CD8-positive, alpha-beta T cell (primary cell): ENCODE measurements at regions of chr7 and their contacts with region 1.

Region 1: GRCh38 chr7:55572378-55573233 is at the start of gene VOPP1:
- DNase-seq: peak; percentile 25 to 88 (median 57)
- ATAC-seq: peak; percentile 44
- H3K4me3 ChIP-seq: peak within 1 kb of the TSS; percentile 74 to 80
- H3K4me3 Mint-ChIP-seq: peak within 1 kb of the TSS; percentile 92
- H3K27ac ChIP-seq: peak within 1 kb of the TSS; percentile 66 to 80
- H3K27ac Mint-ChIP-seq: peak within 1 kb of the TSS; percentile 91
- H3K4me1 ChIP-seq: peaks cover 48% of the 10 kb centered on the region
- H3K4me1 Mint-ChIP-seq: peaks cover 56% of the 10 kb centered on the region
- H3K27me3 ChIP-seq: no peaks in the 10 kb centered on the region
- H3K27me3 Mint-ChIP-seq: no peaks in the 10 kb centered on the region
- CTCF ChIP-seq: no peak
- total RNA-seq, gene VOPP1: 38.7 to 38.9 TPM

Region 2: DNA sequence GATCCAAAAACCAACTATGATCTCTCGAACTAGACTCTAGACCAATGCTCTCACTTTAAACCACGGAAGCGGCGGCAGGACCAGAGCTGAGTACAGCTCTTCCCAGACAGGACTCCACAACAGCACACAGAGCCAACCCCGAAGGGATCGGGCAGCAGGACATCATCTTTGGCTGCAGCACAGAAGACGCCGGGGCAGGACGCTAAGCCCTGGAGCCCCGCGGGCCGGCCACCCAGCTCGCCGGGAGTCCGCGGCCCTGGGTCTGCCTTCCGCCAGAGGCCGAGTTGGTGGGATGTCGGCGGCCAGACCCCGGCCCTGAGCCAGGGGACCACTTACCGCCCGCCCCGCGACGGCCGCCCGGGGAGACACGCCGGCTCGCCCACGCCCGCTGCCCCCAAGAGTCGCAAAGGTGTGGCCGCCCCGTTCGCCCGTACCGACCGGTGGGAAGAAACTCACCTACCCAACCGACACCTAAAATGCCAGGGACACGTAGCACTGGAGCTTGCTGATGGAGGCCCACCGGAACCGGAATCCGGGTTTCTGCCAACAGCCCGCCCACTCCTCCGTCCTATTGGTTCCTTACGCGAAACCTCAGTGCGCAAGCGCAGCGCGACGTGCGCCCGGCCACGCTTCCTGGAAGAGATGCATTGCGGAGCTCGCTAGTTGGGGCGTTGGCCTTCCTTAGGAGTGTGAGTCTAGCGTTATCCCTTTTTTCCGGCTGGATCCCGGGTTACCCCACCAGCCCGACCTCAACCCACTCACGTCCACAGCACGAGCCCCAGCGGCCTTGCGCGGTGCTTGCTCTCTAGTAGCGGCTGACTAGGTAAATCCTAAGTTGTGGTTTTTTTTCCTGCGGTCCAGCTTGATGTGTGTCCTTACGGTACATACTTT is 813.7 kb before region 1 on chr7 and contains the start of gene SEC61G:
- CTCF ChIA-PET with region 1: no interaction called
- POLR2A ChIA-PET with region 1: no interaction called
- intact Hi-C with region 1: loop called in 1 of 2 experiments (anchors 1 kb)
- DNase-seq: peak; percentile 87 to 98 (median 95)
- ATAC-seq: peak; percentile 97
- H3K4me3 ChIP-seq: peak within 1 kb of the TSS; percentile 78 to 96
- H3K4me3 Mint-ChIP-seq: peak within 1 kb of the TSS; percentile 100
- H3K27ac ChIP-seq: peak within 1 kb of the TSS; percentile 74 to 90
- H3K27ac Mint-ChIP-seq: peak within 1 kb of the TSS; percentile 97
- H3K4me1 ChIP-seq: peaks cover 21% of the 10 kb centered on the region
- H3K4me1 Mint-ChIP-seq: peaks cover 46% of the 10 kb centered on the region
- H3K27me3 ChIP-seq: no peaks in the 10 kb centered on the region
- H3K27me3 Mint-ChIP-seq: peaks cover 3% of the 10 kb centered on the region
- CTCF ChIP-seq: no peak
- total RNA-seq, gene SEC61G: 50.5 to 58.0 TPM

Region 3: GRCh38 chr7:55534175-55534915 is 38.3 kb before region 1 on chr7:
- CTCF ChIA-PET with region 1: interaction called, 8 read pairs
- POLR2A ChIA-PET with region 1: interaction called, 21 read pairs
- intact Hi-C with region 1: loop called (anchors 1 to 2 kb)
- DNase-seq: peak in 6 of 9 experiments; percentile 21 to 74 (median 56)
- ATAC-seq: peak; percentile 43
- H3K4me3 ChIP-seq: peak overlapping the region in 1 of 2 experiments; percentile 21
- H3K4me3 Mint-ChIP-seq: peak overlapping the region; percentile 74
- H3K27ac ChIP-seq: peak overlapping the region in 1 of 2 experiments; percentile 38
- H3K27ac Mint-ChIP-seq: peak overlapping the region; percentile 97
- H3K4me1 ChIP-seq: peaks cover 70% of the 10 kb centered on the region
- H3K4me1 Mint-ChIP-seq: peaks cover 94% of the 10 kb centered on the region
- H3K27me3 ChIP-seq: no peaks in the 10 kb centered on the region
- H3K27me3 Mint-ChIP-seq: no peaks in the 10 kb centered on the region
- CTCF ChIP-seq: no peak

Region 4: DNA sequence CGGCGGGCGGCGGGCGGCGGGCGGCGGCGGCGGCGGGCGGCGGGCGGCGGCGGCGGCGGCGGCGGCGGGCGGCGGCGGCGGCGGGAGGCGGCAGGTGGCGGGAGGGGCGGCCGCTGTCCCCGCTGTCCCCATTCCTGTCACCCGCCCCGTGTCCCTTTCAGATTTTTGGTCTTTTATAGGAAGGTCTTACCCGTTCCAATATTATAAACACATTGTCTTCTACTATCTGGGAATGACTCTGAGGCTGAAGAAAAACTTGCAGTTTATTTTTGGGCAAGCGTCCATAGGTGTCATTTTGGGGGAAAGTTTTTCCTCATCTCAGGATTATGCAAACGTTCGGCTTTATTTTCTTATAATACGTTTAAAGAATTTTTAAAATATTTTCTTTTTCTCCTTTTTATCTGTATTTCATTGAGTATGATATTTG is 315.2 kb after region 1 on chr7:
- CTCF ChIA-PET with region 1: no interaction called
- POLR2A ChIA-PET with region 1: no interaction called
- intact Hi-C with region 1: loop called (anchors 5 kb)
- DNase-seq: peak in 2 of 9 experiments; percentile 5 to 38
- ATAC-seq: peak; percentile 15
- H3K4me3 ChIP-seq: peak overlapping the region in 1 of 2 experiments; percentile 58
- H3K4me3 Mint-ChIP-seq: peak overlapping the region; percentile 86
- H3K27ac ChIP-seq: no peak overlapping the region
- H3K27ac Mint-ChIP-seq: peak overlapping the region; percentile 87
- H3K4me1 ChIP-seq: no peaks in the 10 kb centered on the region
- H3K4me1 Mint-ChIP-seq: peaks cover 8% of the 10 kb centered on the region
- H3K27me3 ChIP-seq: no peaks in the 10 kb centered on the region
- H3K27me3 Mint-ChIP-seq: no peaks in the 10 kb centered on the region
- CTCF ChIP-seq: no peak

Region 5: DNA sequence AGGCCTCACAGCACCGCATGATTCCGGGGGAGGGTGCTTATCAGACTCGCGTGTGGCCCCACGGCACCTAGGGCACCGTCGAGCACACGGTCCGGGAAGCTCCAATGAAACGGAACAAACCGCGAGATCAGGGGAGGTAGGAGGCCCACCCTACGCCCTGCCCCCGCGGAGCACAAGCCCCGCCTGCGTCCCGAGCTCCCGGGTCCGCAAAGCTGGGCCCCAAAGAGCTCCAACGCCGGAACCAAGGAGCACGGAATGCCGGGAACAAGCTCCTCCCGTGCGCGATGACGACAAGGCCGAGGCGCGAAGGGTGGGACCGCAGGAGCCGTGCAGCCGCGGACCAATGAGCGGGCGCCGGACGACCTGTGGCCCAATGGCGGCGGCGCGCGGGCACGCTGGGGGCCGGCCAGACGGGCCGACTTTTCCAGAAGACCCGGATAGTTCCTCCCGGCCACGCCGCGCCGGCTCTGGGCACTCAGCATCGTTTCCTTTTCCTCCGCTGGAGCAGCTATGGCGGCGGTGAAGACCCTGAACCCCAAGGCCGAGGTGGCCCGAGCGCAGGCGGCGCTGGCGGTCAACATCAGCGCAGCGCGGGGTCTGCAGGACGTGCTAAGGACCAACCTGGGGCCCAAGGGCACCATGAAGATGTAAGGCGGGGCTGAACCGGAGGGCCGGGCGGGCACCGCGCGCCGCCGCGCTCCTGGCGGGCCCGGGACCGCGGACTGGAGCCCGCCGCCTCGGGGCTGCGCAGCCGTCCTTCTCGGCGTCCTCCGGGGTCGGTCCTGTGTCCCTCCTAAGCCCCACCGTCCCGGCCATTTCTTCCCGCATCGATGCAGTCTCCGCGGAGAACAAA is 479.0 kb after region 1 on chr7 and contains the starts of genes CCT6A and PSPH:
- CTCF ChIA-PET with region 1: no interaction called
- POLR2A ChIA-PET with region 1: no interaction called
- intact Hi-C with region 1: loop called in 1 of 2 experiments (anchors 5 kb)
- DNase-seq: peak; percentile 64 to 95 (median 88)
- ATAC-seq: peak; percentile 86
- H3K4me3 ChIP-seq: peak within 1 kb of the TSS; percentile 72 to 81
- H3K4me3 Mint-ChIP-seq: peak within 1 kb of the TSS; percentile 92
- H3K27ac ChIP-seq: peak within 1 kb of the TSS; percentile 62 to 83
- H3K27ac Mint-ChIP-seq: peak within 1 kb of the TSS; percentile 95
- H3K4me1 ChIP-seq: peaks cover 29% of the 10 kb centered on the region
- H3K4me1 Mint-ChIP-seq: peaks cover 47% of the 10 kb centered on the region
- H3K27me3 ChIP-seq: no peaks in the 10 kb centered on the region
- H3K27me3 Mint-ChIP-seq: no peaks in the 10 kb centered on the region
- CTCF ChIP-seq: no peak
- total RNA-seq, gene CCT6A: 36.3 to 40.9 TPM
- total RNA-seq, gene PSPH: 0.89 to 1.1 TPM

Region 6: DNA sequence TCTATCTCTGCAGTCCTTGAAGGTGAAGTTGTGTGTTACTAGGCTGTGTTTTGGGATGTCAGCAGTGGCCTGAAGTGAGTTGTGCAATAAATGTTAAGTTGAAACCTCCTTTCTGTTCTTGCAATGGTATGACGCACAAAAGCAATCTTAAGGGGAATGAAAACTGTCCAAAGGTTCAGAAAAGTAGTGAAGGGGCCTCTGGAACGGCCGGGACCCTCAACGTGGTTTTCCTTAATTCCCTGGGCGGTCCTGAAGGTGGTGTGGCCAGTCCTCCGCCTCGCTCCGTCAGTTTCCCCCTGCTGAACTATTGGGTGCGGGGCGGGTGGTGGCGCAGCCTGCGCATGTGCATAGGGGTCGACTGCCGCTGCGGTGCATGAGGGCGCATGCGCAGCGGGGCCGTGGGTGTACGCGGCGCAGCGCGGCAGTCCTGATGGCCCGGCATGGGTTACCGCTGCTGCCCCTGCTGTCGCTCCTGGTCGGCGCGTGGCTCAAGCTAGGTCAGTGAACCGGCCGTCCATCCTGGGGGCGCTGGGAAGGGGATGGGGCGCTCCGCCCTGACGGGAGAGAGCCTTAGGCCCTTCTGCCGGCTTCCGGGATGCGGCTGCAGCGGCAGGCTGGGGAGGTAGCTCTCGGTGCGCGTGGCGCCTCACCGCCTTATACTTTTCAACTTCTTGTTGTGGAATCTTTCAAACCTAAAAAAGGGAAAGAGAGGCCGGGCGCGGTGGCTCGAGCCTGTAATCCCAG is 491.4 kb after region 1 on chr7 and contains the start of gene SUMF2:
- CTCF ChIA-PET with region 1: no interaction called
- POLR2A ChIA-PET with region 1: no interaction called
- intact Hi-C with region 1: no loop called
- DNase-seq: peak; percentile 80 to 95 (median 90)
- ATAC-seq: peak; percentile 90
- H3K4me3 ChIP-seq: peak within 1 kb of the TSS; percentile 79 to 99
- H3K4me3 Mint-ChIP-seq: peak within 1 kb of the TSS; percentile 91
- H3K27ac ChIP-seq: peak within 1 kb of the TSS; percentile 86 to 88
- H3K27ac Mint-ChIP-seq: peak within 1 kb of the TSS; percentile 91
- H3K4me1 ChIP-seq: peaks cover 22% of the 10 kb centered on the region
- H3K4me1 Mint-ChIP-seq: peaks cover 28% of the 10 kb centered on the region
- H3K27me3 ChIP-seq: no peaks in the 10 kb centered on the region
- H3K27me3 Mint-ChIP-seq: no peaks in the 10 kb centered on the region
- CTCF ChIP-seq: no peak
- total RNA-seq, gene SUMF2: 97.8 to 103 TPM